PC-3 (cell line): ENCODE measurements at regions of chr9 and their contacts with region 1.

Region 1: DNA sequence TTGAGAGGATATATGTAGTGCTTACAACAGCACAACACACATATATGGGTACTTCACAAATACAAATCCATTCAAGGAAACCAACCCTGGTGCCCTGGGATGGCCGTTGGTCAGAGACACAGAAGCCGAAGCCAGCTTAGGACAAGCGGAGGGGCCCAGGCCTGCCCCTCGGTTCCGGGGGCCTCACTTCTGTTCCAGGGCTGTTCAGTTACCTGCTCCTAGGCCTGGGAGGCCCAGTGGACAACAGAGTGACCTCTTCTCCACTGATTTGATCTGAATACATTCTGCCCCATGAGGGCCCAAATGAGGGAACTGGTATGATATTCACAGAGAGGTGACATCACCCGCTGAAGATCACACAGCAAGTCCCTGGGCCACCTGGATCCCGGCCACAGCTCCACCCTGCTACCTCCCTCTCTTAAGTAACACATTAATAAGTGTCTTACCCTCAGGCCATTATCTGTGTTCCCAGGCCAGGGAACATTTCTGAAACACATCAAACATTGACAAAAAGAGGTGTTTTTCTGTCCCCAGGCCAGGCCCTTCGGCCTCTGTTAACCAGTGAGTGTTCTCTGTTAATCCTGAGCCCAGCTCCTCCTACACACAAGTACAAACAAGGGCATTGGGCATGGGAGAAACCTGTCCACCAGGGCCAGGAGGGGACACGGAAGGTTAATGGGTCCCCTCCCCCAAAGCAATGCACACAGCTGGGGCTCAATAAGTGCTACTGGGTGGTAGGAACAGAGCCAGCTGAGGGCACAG is 4.5 kb upstream of the GRHPR start:
- DNase-seq: peak; percentile 32
- ATAC-seq: no peak
- H3K4me3 ChIP-seq: no peak overlapping the region
- H3K27ac ChIP-seq: no peak overlapping the region
- H3K4me1 ChIP-seq: peaks cover 11% of the 10 kb centered on the region
- H3K27me3 ChIP-seq: no peaks in the 10 kb centered on the region
- CTCF ChIP-seq: no peak

Region 2: DNA sequence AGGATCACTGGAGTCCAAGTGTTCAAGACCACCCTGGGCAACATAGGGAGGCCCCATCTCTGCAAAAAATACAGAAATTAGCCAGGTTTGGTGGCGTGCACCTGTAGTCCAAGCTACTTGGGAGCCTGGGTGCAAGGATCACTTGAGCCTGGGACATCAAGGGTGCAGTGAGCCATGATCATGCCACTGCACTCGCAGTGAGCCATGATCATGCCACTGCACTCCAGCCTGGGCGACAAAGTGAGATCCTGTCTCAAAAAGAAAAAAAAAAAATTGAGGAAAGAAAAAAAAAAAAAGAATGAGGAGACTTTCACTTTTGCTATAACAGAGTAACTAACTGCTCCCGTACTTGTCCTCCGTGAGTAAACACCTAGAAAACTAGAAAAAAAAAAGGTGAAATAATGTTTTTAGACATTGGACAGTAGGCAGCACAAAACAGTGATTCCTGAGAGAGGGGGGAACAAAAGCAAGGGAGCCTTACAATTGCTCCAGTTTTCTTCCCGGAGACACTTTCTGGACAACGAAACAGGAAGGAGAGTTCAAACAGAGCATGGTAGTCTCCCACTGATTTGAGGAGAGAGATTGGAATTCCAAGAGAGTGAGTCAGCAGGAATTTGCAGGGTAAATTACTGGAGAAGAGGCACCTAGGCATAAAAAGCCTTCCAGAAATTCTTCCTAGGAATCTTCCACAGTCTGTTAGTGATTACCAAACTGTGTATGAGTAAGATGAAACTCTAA is 54.1 kb after region 1 on chr9:
- CTCF ChIA-PET with region 1: no interaction called
- POLR2A ChIA-PET with region 1: no interaction called
- intact Hi-C with region 1: no loop called
- DNase-seq: peak; percentile 96
- ATAC-seq: peak; percentile 96
- H3K4me3 ChIP-seq: peak overlapping the region; percentile 75
- H3K27ac ChIP-seq: peak overlapping the region; percentile 95
- H3K4me1 ChIP-seq: peaks cover 10% of the 10 kb centered on the region
- H3K27me3 ChIP-seq: no peaks in the 10 kb centered on the region
- CTCF ChIP-seq: no peak

Region 3: DNA sequence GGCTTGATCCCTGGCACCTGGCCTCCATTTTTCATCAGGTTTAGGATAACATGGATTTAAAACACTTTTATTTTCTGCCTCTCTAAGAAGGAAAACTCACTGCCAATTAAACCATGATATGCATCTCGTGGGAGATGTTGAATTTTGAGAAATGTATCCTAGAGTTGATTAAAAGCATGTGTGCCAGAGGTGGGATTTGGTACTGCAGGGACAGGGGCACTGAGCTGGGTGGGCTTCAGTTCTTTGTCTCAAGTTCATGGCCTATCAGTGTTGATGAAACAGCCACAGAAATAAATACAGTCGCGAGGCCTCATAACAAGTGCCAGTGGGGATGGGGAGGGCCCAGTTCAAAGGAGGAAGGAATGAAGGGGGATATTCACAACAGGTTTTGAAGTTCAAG is 102.6 kb after region 1 on chr9:
- CTCF ChIA-PET with region 1: interaction called, 12 read pairs
- POLR2A ChIA-PET with region 1: no interaction called
- intact Hi-C with region 1: no loop called
- DNase-seq: no peak
- ATAC-seq: no peak
- H3K4me3 ChIP-seq: no peak overlapping the region
- H3K27ac ChIP-seq: no peak overlapping the region
- H3K4me1 ChIP-seq: no peaks in the 10 kb centered on the region
- H3K27me3 ChIP-seq: no peaks in the 10 kb centered on the region
- CTCF ChIP-seq: no peak